Body of pancreas (tissue), 4 donors: ENCODE measurements at regions of chr11 and their contacts with region 1.

Region 1: DNA sequence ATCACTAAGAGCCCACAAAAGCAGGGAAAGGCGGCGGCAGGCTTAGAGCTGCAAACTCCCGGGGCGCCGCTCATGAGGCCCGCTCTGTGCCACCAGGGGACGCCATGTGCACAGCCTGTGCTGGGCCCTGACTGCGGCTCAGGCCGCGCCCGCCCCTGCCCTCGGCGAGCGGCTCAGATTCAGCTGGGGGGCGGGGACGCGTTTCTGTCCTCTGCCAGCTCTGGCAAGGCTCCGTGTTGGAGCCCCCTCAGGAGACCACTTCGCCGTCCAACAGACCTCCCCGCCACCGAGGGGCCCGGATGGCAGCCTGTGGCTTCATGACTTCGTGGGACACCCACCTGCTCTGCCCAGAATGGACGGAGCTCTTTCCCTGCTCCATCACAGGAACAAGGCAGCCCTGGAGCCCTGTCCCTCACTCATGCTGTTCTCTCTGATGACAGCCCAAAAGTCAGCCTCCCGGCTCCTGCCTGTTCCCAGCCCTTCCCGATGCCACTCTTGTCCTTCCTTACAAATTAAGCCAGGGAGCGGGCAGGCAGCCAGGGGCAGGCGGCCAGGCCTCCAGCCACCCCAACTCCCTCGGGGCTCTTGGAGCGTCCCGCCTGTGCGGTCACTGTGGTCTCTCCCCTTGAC is 69.1 kb downstream of the NAT10 start:
- DNase-seq: peak; percentile 83 to 89 (median 84)
- ATAC-seq: peak; percentile 95
- H3K4me3 ChIP-seq: no peak overlapping the region
- H3K27ac ChIP-seq: peak overlapping the region in 2 of 4 donors; percentile 6 to 7
- H3K4me1 ChIP-seq: peaks cover 14% of the 10 kb centered on the region
- H3K27me3 ChIP-seq: no peaks in the 10 kb centered on the region
- CTCF ChIP-seq: peak; percentile 87 to 98 (median 96)
- POLR2A ChIP-seq: no peak

Region 2: GRCh38 chr11:34492806-34493414 is 318.4 kb after region 1 on chr11:
- intact Hi-C with region 1: loop called (anchors 10 kb)
- DNase-seq: peak; percentile 71 to 85 (median 76)
- ATAC-seq: peak; percentile 52
- H3K4me3 ChIP-seq: no peak overlapping the region
- H3K27ac ChIP-seq: no peak overlapping the region
- H3K4me1 ChIP-seq: no peaks in the 10 kb centered on the region
- H3K27me3 ChIP-seq: no peaks in the 10 kb centered on the region
- CTCF ChIP-seq: peak; percentile 24 to 81 (median 78)
- POLR2A ChIP-seq: no peak